ENCODE measurements at regions of chr3 and their contacts with region 1.

Region 1: DNA sequence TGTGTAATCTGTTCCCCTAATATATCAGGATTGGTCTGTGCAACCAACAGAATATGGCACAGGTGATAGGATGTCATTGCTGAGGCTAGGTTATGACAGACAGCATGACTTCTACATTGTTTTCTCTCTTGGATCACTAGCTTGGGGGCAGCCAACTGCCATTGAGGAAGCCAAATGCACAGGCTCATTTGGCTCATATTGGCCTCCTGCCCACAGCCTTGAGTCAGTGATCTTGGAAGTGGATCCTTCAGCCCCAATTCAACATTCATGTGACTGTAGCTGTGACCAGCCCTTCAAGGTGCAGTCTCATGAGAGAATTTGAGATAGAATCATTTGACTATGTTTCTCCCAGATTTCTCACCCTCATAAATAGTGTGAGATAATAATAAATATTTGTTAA is 675.6 kb downstream of the GRM7 start:
- DNase-seq: no peak
- H3K4me3 ChIP-seq: no peak overlapping the region
- H3K27ac ChIP-seq: no peak overlapping the region
- H3K4me1 ChIP-seq: no peaks in the 10 kb centered on the region
- H3K27me3 ChIP-seq: no peaks in the 10 kb centered on the region
- CTCF ChIP-seq: no peak
- POLR2A ChIP-seq: no peak

Region 2: GRCh38 chr3:7134234-7134633 is 402.3 kb before region 1 on chr3:
- intact Hi-C with region 1: loop called (anchors 10 kb)
- DNase-seq: no peak
- H3K4me3 ChIP-seq: no peak overlapping the region
- H3K27ac ChIP-seq: no peak overlapping the region
- H3K4me1 ChIP-seq: no peaks in the 10 kb centered on the region
- H3K27me3 ChIP-seq: no peaks in the 10 kb centered on the region
- CTCF ChIP-seq: no peak
- POLR2A ChIP-seq: no peak